ENCODE measurements at regions of chr5 and their contacts with region 1.

Region 1: GRCh38 chr5:95591490-95591901 is 28.4 kb upstream of the GPR150 start:
- DNase-seq: no peak
- ATAC-seq: no peak
- H3K4me3 ChIP-seq: no peak overlapping the region
- H3K4me3 Mint-ChIP-seq: no peak overlapping the region
- H3K27ac ChIP-seq: no peak overlapping the region
- H3K27ac Mint-ChIP-seq: peak overlapping the region in 1 of 2 donors; percentile 42
- H3K4me1 ChIP-seq: peaks cover 0 to 12% of the 10 kb centered on the region in 2 experiments
- H3K4me1 Mint-ChIP-seq: peaks cover 17 to 22% (median 21%) of the 10 kb centered on the region in 3 donors
- H3K27me3 ChIP-seq: no peaks in the 10 kb centered on the region
- H3K27me3 Mint-ChIP-seq: no peaks in the 10 kb centered on the region

Region 2: GRCh38 chr5:95565280-95565920 is 26.1 kb before region 1 on chr5:
- CTCF ChIA-PET with region 1: no interaction called
- POLR2A ChIA-PET with region 1: interaction called in 1 of 2 experiments, 15 read pairs
- DNase-seq: no peak
- ATAC-seq: no peak
- H3K4me3 ChIP-seq: no peak overlapping the region
- H3K4me3 Mint-ChIP-seq: no peak overlapping the region
- H3K27ac ChIP-seq: no peak overlapping the region
- H3K27ac Mint-ChIP-seq: no peak overlapping the region
- H3K4me1 ChIP-seq: no peaks in the 10 kb centered on the region
- H3K4me1 Mint-ChIP-seq: peaks cover 11 to 18% (median 15%) of the 10 kb centered on the region in 3 donors
- H3K27me3 ChIP-seq: no peaks in the 10 kb centered on the region
- H3K27me3 Mint-ChIP-seq: no peaks in the 10 kb centered on the region